AG04449 (cell line): ENCODE measurements at regions of chr17 and their contacts with region 1.

Region 1: GRCh38 chr17:82551779-82552457 is 32.4 kb downstream of the FOXK2 start:
- DNase-seq: no peak
- H3K4me3 ChIP-seq: no peak overlapping the region
- CTCF ChIP-seq: peak; percentile 75

Region 2: GRCh38 chr17:82330322-82331239 is 221.3 kb before region 1 on chr17:
- CTCF ChIA-PET with region 1: no interaction called
- POLR2A ChIA-PET with region 1: no interaction called
- DNase-seq: no peak
- H3K4me3 ChIP-seq: no peak overlapping the region
- CTCF ChIP-seq: no peak

Region 3: DNA sequence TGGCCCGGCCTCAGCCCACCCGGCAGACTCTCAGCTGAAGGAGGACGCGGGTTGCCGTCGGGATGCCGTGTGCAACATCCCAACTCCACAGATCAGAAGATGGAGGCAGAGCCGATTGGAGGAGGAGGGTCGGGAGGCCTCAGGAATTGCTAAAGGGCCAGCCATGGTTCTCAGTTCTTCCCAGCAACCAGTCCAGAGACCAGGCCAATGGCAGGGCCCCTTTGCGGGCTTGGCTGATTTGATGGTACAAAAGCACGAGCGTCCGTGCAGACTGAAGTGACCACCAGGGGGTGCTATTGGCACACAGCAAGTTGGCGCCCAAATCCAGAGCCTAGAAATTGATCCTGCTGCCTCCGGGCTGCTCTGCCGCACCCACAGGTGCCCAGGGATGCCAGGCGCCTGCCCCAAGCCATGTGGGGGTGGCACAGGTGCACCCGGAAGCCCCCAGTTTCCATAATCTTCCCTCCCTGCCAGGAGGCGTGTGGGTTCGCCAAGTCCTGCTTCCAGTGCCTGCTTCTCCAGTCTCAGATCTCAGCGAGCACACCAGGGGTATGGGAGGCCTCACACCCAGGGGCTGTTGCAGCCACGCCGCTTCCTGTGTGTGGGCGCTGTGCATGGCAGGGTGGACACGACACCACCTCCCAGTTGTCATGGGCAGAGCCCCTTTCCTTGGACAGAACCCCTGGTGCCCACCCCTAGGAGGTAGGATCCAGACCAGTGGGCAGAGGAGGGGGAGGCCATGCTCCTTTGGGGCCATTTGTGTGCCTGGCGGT is 200.0 kb before region 1 on chr17:
- CTCF ChIA-PET with region 1: interaction called, 15 read pairs
- POLR2A ChIA-PET with region 1: no interaction called
- DNase-seq: peak; percentile 36
- H3K4me3 ChIP-seq: no peak overlapping the region
- CTCF ChIP-seq: peak; percentile 94

Region 4: GRCh38 chr17:82518826-82519810 is 32.8 kb before region 1 on chr17 and contains the start of gene FOXK2:
- CTCF ChIA-PET with region 1: interaction called, 11 read pairs
- POLR2A ChIA-PET with region 1: no interaction called
- DNase-seq: peak; percentile 71
- H3K4me3 ChIP-seq: peak within 1 kb of the TSS; percentile 70
- CTCF ChIP-seq: no peak

Region 5: GRCh38 chr17:82536512-82537201 is 15.3 kb before region 1 on chr17:
- CTCF ChIA-PET with region 1: interaction called, 47 read pairs
- POLR2A ChIA-PET with region 1: no interaction called
- DNase-seq: no peak
- H3K4me3 ChIP-seq: peak overlapping the region; percentile 33
- CTCF ChIP-seq: no peak

Region 6: GRCh38 chr17:82574041-82574440 is 22.1 kb after region 1 on chr17:
- CTCF ChIA-PET with region 1: interaction called, 12 read pairs
- POLR2A ChIA-PET with region 1: no interaction called
- DNase-seq: no peak
- H3K4me3 ChIP-seq: no peak overlapping the region
- CTCF ChIP-seq: no peak